ENCODE measurements at regions of chr19 and their contacts with region 1.

Region 1: DNA sequence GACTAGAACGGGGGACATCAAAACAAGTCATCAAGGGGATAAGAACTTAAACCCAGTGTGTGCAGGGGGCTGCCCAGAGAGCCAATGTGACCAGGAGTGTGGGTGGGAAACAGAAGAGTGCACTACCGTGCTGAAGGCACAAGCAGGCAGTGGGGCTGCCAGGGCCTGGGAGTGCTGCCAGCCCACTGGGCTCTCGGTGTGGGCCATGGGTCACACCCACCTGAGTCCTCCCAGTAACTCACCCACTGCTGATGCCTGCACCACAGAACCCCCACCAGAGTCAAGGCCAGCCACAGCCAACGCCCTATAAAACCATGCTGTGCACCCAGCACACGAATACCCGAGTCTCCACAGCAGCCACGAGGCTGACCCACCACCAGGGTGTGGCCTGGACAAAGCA is 8.5 kb downstream of the MED26 start:
- DNase-seq: no peak
- ATAC-seq: peak; percentile 50
- H3K4me3 ChIP-seq: no peak overlapping the region
- H3K27ac ChIP-seq: no peak overlapping the region
- H3K4me1 ChIP-seq: no peaks in the 10 kb centered on the region
- H3K27me3 ChIP-seq: no peaks in the 10 kb centered on the region

Region 2: DNA sequence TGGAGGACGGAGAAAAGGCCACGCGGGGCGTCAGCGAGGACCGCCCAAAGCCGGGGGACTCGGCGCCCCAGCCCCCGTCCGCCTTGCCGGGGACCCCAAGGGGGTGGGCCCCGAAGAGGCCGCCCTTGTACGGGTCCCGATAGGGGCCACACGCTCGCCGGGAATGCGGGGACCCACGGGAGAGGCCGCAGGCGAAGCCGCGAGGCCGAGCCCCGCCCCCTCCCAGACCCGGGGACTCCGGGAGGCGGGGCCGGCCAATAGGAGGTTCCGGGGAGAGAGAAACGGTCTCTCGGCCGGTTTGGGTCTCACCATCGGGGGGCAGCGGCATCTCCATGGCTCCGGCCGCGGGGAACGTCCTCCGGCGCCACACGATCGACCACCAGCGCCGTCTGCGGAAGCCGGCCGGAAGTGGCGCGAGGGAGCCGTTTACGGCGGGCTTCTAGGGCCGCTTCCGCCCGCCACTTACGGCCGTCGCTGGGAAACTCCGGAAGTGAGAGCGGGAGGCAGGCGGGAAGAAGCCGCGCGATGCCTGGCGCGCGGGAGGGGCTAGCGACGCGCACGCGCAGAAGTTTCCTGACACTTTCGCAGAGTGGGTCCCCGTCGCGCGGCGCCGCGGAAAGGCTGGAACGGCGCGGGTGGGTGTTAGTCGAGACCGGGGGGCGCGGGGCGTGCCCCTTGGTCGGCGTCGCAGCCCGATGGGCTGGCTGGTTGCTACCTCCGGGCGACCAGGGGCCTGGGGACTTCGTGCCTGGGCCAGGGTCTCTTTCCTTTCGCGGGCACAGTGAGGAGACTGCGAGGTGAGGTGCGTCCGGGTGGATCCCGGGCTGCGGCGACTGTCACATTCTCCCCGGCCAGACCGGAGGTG is 77.2 kb before region 1 on chr19 and contains the start of gene CHERP:
- intact Hi-C with region 1: no loop called
- DNase-seq: peak; percentile 97 to 98
- ATAC-seq: peak; percentile 98
- H3K4me3 ChIP-seq: peak within 1 kb of the TSS; percentile 80 to 90
- H3K27ac ChIP-seq: peak within 1 kb of the TSS in 1 of 2 donors; percentile 16
- H3K4me1 ChIP-seq: peaks cover 0 to 6% of the 10 kb centered on the region in 2 donors
- H3K27me3 ChIP-seq: no peaks in the 10 kb centered on the region
- total RNA-seq, gene CHERP: 32.4 to 36.6 TPM

Region 3: DNA sequence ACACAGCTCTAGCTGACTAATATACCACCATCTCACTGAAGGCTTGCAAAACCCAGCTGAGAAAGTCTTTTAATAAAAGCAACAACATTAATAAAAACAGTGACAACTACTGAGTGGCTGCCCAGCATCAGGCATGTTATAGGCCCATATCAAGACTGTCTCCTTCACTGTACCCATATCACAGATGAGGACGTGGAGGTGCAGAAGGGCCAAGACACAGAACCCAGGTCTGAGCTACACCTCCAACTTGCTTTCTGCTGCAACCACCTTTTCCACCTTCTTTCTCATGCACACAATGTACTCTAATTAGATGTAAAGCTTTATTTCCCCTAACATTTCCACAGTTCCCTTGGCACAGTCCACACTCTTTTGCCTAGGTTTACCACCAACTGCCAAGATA is 19.2 kb after region 1 on chr19:
- intact Hi-C with region 1: loop called in 1 of 2 experiments (anchors 1 kb)
- DNase-seq: no peak
- ATAC-seq: no peak
- H3K4me3 ChIP-seq: no peak overlapping the region
- H3K27ac ChIP-seq: no peak overlapping the region
- H3K4me1 ChIP-seq: no peaks in the 10 kb centered on the region
- H3K27me3 ChIP-seq: no peaks in the 10 kb centered on the region

Measured in aorta (tissue), 5 donors.